ENCODE measurements at regions of chr15 and their contacts with region 1.

Region 1: DNA sequence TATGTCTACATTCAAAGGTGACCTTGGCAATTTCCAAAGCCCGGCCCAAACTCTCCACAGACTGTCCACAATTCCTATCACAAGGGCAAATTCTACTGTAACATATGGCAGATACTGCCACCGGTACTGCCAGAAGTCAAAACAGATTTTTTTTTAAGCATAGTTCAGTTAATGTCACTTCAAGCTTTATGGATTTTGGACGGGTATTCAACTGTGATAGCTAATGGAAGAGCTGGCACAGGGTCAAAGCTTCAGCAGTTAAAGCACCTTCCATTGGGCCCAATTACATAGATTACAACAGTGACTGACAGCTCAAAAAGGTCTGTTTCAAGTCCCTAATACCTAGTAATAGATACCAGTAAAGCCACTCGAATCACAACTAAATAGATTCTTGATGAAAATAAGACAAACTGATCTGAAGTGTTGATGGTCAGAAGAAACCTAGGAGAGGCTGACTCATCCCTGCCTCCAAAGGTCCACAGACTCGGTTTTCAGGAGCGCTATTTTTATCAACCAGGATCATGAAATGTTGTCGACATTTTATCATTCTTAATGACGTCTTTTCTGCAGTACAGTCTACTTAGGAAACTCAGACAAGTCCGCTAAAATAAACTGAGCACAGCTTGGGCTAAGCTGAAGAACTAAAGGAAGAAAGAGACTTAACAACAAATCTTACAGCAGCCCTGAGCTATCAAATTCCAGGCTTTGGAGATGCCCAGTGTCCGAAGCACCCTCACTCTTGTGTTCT is 38.7 kb downstream of the ANXA2 start:
- DNase-seq: no peak
- H3K4me3 ChIP-seq: no peak overlapping the region
- H3K27ac ChIP-seq: peak overlapping the region; percentile 11 to 28
- H3K4me1 ChIP-seq: no peaks in the 10 kb centered on the region
- H3K27me3 ChIP-seq: no peaks in the 10 kb centered on the region
- CTCF ChIP-seq: no peak
- POLR2A ChIP-seq: no peak

Region 2: DNA sequence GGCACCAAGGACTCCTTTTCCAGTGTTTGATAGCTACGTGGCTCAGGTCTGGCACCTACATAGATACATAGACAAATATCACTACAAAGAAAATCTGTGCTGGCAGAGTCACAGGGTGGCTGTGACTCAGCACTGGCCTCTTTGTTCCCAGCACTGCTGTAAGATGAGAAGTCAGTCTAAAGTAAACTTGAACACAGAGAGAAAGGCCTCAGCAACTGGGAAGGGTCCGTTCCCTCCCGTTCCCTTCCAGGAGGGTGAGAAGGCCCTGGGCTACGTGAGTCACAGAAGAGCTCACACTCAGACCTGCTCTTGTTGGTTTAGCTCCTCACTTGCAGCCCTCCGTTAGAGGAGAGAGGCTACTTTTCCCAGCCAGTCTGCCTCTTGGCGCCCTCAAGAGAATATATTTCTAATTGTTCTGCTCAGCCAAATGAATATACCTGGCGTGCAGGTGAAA is 15.5 kb after region 1 on chr15:
- intact Hi-C with region 1: no loop called
- DNase-seq: peak; percentile 81 to 83
- H3K4me3 ChIP-seq: peak overlapping the region in 1 of 3 donors; percentile 40
- H3K27ac ChIP-seq: peak overlapping the region; percentile 93
- H3K4me1 ChIP-seq: peaks cover 16 to 70% of the 10 kb centered on the region in 2 donors
- H3K27me3 ChIP-seq: no peaks in the 10 kb centered on the region
- CTCF ChIP-seq: no peak
- POLR2A ChIP-seq: no peak

Region 3: GRCh38 chr15:60458721-60459120 is 99.6 kb after region 1 on chr15:
- intact Hi-C with region 1: loop called (anchors 10 kb)
- DNase-seq: no peak
- H3K4me3 ChIP-seq: no peak overlapping the region
- H3K27ac ChIP-seq: no peak overlapping the region
- H3K4me1 ChIP-seq: no peaks in the 10 kb centered on the region
- H3K27me3 ChIP-seq: no peaks in the 10 kb centered on the region
- CTCF ChIP-seq: no peak
- POLR2A ChIP-seq: no peak

Measured in breast epithelium (tissue), 4 donors.